Sciatic nerve (tissue), 2 donors: ENCODE measurements at regions of chr9 and their contacts with region 1.

Region 1: GRCh38 chr9:126500684-126501382 is 112.9 kb upstream of the LMX1B start:
- DNase-seq: peak; percentile 87
- ATAC-seq: peak; percentile 82

Region 2: DNA sequence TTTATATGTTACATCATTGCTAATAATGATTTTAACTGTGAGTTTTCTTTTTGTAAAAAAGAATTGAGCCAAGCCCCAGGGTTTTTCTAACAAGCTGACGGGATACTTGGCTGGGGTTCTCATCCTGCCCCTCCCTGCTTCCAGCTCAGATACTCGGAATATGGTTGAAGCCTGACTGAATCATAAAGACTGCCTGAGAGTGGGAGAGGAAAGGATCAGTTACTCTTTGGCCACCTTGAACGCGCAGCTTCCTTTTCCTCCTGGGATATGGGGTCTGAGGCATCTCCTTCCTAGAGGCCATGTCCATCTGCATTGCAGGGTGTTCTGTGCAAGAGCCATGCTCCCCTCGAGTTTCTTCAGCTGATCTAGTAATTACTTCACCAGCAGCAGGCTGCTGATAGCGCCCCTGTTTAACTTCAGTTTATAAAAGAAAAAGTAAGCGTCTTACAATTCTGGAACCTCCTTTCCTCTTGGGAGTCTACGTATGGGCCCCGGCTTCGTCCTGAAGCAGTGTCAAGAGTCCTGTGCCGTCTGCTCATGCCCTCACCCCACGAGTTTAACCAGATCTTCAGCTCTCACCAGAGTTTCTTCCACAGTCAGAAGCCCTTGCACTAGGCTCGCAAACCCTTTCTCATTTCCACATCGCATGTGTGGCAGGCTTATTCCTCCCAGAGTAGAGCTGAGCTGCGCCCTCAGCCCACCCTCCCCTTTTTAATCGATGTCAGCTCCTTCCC is 44.2 kb before region 1 on chr9:
- intact Hi-C with region 1: no loop called
- DNase-seq: peak; percentile 38
- ATAC-seq: peak; percentile 61

Region 3: DNA sequence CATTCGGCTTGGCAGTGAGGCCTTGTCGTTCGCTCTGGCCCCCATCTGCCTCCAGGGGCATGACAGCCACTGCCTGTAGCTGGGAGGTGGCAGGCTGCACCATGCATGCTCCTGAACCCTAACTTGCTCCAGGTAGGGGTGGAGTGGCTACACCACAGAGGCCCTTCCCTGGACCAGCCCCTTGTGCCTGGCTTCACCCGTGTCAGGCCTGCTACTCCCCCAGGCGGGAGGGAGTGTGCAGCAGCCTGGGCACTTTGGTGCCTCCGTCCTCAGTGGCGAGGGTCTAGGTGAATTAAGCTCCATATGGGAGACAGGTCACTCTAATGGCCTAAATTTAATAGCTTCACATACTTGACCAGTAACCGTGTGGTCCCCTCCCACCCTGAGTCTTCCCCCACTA is 53.5 kb after region 1 on chr9:
- intact Hi-C with region 1: loop called (anchors 2 kb)
- DNase-seq: no peak
- ATAC-seq: no peak